ENCODE measurements at regions of chr19 and their contacts with region 1.

Region 1: DNA sequence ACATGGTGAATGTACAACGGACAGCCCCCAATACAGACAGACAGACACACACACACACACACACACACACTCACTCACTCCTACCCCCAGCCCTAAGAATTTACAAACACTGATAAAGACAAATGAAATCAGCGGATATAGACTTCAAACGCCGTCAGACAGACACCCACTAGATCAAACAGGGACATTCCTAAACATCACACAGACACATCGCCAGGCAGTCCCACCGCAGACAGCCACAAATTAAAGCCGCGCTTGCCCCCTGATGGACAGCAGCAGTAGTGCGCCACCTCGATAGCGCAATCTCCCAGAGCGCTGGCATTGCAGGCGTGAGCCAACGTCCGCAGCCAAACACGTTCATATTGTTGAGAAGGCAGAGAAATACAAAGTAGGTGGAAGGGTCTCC is 24.7 kb upstream of the ADGRE1 start:
- DNase-seq: peak; percentile 90 to 96
- ATAC-seq: peak; percentile 86 to 95 (median 88)
- H3K4me3 ChIP-seq: peak overlapping the region; percentile 40
- H3K4me3 Mint-ChIP-seq: peak overlapping the region; percentile 88
- H3K27ac ChIP-seq: peak overlapping the region; percentile 73
- H3K27ac Mint-ChIP-seq: peak overlapping the region; percentile 87 to 93
- H3K4me1 ChIP-seq: peaks cover 13% of the 10 kb centered on the region
- H3K4me1 Mint-ChIP-seq: peaks cover 13 to 19% of the 10 kb centered on the region in 2 donors
- H3K27me3 ChIP-seq: no peaks in the 10 kb centered on the region
- H3K27me3 Mint-ChIP-seq: no peaks in the 10 kb centered on the region
- CTCF ChIP-seq: peak; percentile 57

Region 2: DNA sequence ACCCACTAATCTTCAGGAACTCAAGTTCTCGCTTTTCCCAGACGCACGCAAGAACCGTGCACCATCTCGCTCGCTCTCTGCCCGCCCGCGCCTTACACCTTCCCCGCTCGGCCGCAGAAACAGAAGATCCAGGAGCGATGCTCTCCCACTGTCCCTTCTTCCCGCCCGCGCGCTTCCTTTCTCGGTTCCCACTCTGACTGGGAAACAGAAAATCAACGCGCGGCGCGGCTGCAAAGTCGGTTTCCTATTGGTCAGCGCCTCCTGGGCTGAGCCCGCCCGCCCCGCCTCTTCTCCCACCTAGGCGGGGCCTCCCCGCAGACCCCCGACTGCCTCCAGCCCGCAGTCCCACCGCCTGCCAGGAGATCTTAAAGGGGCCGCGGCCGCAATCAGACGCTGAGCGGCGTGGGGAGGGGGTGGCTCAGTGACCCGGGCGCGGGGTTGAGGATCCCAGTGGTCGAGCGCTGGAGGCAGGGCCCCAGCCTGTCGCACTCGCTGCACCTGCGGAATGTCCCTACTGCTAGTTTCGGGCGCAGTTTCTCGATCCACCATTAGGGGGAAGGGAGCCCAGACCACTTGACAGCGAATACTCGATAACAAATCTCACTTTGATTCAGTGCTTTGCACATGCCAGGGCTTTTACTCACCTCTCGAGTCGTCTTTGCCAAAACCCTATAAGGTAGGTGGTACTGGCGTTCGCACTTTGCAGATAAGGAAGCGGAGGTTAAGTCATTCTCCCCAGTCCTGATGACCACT is 402.4 kb before region 1 on chr19:
- intact Hi-C with region 1: loop called (anchors 1 kb)
- DNase-seq: peak; percentile 92 to 97
- ATAC-seq: peak; percentile 83 to 91 (median 87)
- H3K4me3 ChIP-seq: peak overlapping the region; percentile 71
- H3K4me3 Mint-ChIP-seq: peak overlapping the region; percentile 99
- H3K27ac ChIP-seq: peak overlapping the region; percentile 81
- H3K27ac Mint-ChIP-seq: peak overlapping the region; percentile 91 to 95
- H3K4me1 ChIP-seq: peaks cover 30% of the 10 kb centered on the region
- H3K4me1 Mint-ChIP-seq: peaks cover 18 to 27% of the 10 kb centered on the region in 2 donors
- H3K27me3 ChIP-seq: peaks cover 6% of the 10 kb centered on the region
- H3K27me3 Mint-ChIP-seq: peaks cover 0 to 6% of the 10 kb centered on the region in 2 donors
- CTCF ChIP-seq: peak; percentile 72

Region 3: GRCh38 chr19:6632002-6632621 is 230.6 kb before region 1 on chr19:
- intact Hi-C with region 1: loop called (anchors 1 kb)
- DNase-seq: peak; percentile 65 to 93
- ATAC-seq: peak; percentile 92 to 98 (median 95)
- H3K4me3 ChIP-seq: no peak overlapping the region
- H3K4me3 Mint-ChIP-seq: peak overlapping the region; percentile 4
- H3K27ac ChIP-seq: no peak overlapping the region
- H3K27ac Mint-ChIP-seq: peak overlapping the region in 1 of 2 donors; percentile 66
- H3K4me1 ChIP-seq: peaks cover 16% of the 10 kb centered on the region
- H3K4me1 Mint-ChIP-seq: peaks cover 11 to 20% of the 10 kb centered on the region in 2 donors
- H3K27me3 ChIP-seq: no peaks in the 10 kb centered on the region
- H3K27me3 Mint-ChIP-seq: peaks cover 0 to 7% of the 10 kb centered on the region in 2 donors
- CTCF ChIP-seq: peak; percentile 81

Region 4: DNA sequence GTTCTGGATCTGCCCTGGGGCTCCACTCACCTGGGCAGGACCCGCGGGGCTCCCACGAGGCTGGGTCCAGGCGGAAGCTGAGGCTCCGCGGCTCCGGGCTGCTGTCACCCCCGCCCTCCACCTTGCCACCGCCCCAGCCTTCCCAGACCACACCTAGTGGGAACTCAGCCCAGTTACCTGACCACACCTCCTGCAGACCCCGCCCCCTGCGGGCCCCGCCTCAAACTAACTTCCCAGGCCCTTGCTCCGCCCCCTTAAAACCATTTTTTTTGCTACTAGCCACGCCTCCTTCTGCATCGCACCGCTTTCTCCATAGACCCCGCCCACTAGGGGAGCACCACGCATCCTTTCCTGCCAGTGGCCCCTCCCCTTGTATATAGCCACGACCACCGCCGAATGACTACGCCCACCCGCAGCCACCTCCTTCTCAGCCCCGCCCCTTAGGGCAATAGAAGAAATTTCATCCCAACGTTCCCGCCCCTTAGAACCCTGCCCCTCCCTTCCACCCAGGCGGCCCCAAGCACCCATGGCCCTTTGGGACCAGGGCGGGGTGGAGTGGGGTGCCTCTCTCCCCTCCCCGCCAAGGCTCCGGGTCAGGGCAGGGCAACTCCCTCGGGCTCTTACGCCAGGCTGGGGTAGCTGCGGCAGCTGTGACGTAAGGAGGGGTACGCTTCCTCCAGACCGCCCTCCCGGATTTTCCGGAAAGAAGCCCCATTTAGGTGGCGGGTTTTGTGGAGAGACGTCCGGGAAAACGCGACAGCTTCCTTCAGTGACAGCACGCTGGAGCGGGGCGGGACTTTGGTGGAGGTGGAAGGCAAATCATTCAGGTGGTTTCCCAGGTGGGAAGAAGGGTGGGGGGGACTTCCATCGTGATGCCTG is 95.1 kb before region 1 on chr19 and contains the start of gene SH2D3A:
- intact Hi-C with region 1: loop called (anchors 1 kb)
- DNase-seq: peak; percentile 79 to 97
- ATAC-seq: peak; percentile 60 to 80 (median 63)
- H3K4me3 ChIP-seq: peak within 1 kb of the TSS; percentile 65
- H3K4me3 Mint-ChIP-seq: peak within 1 kb of the TSS; percentile 90
- H3K27ac ChIP-seq: peak within 1 kb of the TSS; percentile 96
- H3K27ac Mint-ChIP-seq: peak within 1 kb of the TSS; percentile 85 to 96
- H3K4me1 ChIP-seq: peaks cover 43% of the 10 kb centered on the region
- H3K4me1 Mint-ChIP-seq: peaks cover 34 to 44% of the 10 kb centered on the region in 2 donors
- H3K27me3 ChIP-seq: no peaks in the 10 kb centered on the region
- H3K27me3 Mint-ChIP-seq: no peaks in the 10 kb centered on the region
- CTCF ChIP-seq: no peak
- total RNA-seq, gene SH2D3A: 14.6 to 20.1 (median 15.3) TPM

Measured in natural killer cell (primary cell).